Sigmoid colon (tissue), 7 donors: ENCODE measurements at regions of chr16 and their contacts with region 1.

Region 1: GRCh38 chr16:70711211-70712031 is 25.6 kb upstream of the MTSS2 start:
- DNase-seq: no peak
- H3K4me3 ChIP-seq: no peak overlapping the region
- H3K27ac ChIP-seq: peak overlapping the region in 3 of 4 donors; percentile 96 to 99 (median 99)
- H3K4me1 ChIP-seq: peaks cover 0 to 99% (median 98%) of the 10 kb centered on the region in 4 donors
- H3K27me3 ChIP-seq: no peaks in the 10 kb centered on the region
- CTCF ChIP-seq: no peak
- EP300 ChIP-seq: no peak
- POLR2A ChIP-seq: no peak

Region 2: GRCh38 chr16:70614208-70614951 is 97.0 kb before region 1 on chr16:
- intact Hi-C with region 1: no loop called
- DNase-seq: no peak
- H3K4me3 ChIP-seq: no peak overlapping the region
- H3K27ac ChIP-seq: peak overlapping the region in 1 of 4 donors; percentile 25
- H3K4me1 ChIP-seq: peaks cover 0 to 12% (median 6%) of the 10 kb centered on the region in 4 donors
- H3K27me3 ChIP-seq: no peaks in the 10 kb centered on the region
- CTCF ChIP-seq: no peak
- EP300 ChIP-seq: no peak
- POLR2A ChIP-seq: no peak

Region 3: DNA sequence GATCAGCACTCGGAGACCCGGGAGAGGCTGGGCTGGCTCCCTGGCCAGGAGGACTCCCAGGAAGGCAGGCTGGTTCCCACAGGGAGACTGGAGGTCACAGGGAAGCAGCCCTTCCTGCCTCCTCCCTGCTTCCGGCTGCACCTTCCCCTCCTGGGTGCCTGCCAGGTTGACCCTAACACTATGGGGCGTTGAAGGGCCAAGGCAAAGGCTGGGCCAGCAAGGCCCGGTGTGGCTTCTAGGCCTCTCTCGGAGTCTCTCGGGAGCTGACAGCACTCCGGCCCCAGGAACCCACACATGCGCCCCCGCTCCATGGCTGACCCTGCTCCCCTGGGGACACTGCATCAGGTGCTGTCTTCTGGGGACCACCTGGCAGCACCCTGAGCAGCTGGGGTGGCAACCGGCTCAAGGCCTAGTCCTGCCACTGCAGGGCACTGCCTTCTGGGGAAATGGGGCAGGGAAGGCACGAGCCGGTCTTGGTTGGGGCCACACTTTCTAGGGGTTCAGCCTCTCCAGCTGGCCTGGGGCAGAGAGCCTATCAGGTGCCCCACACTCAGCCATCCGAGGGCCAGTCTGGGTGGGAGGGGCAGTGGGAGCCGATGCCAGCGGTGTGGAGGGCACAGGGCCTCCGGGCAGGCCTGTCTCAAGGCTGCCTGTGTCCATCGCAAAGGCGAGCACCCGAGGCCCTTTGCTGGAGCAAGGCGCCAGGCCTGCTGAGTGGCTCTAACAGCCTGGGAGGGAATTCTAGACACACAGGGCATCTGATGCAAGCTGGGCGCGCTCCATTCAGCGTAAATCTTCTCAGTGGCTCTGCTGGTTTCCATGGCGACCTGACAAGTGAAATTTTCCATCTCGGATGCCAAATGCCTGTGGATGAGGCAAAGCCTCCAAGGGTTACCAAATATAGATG is 19.9 kb before region 1 on chr16:
- intact Hi-C with region 1: loop called (anchors 2 kb)
- DNase-seq: peak; percentile 97
- H3K4me3 ChIP-seq: no peak overlapping the region
- H3K27ac ChIP-seq: peak overlapping the region; percentile 95 to 99 (median 98)
- H3K4me1 ChIP-seq: peaks cover 4 to 100% (median 100%) of the 10 kb centered on the region in 4 donors
- H3K27me3 ChIP-seq: no peaks in the 10 kb centered on the region
- CTCF ChIP-seq: no peak
- EP300 ChIP-seq: peak in 3 of 4 donors; percentile 83 to 90 (median 90)
- POLR2A ChIP-seq: peak; percentile 16 to 42